ENCODE measurements at regions of chrX and their contacts with region 1.

Region 1: GRCh38 chrX:101348452-101349192 is at the start of gene TIMM8A:
- DNase-seq: peak; percentile 60
- ATAC-seq: peak; percentile 96
- H3K4me3 ChIP-seq: peak within 1 kb of the TSS; percentile 100
- H3K27ac ChIP-seq: peak within 1 kb of the TSS; percentile 100
- H3K4me1 ChIP-seq: no peaks in the 10 kb centered on the region
- H3K27me3 ChIP-seq: no peaks in the 10 kb centered on the region; the same call in 1 of the 2 replicates
- CTCF ChIP-seq: no peak
- POLR2A ChIP-seq: peak; percentile 7; the same call in 1 of the 2 replicates
- RAD21 ChIP-seq: no peak
- total RNA-seq, gene TIMM8A: 2.2 and 3.1 TPM in 2 replicates

Region 2: DNA sequence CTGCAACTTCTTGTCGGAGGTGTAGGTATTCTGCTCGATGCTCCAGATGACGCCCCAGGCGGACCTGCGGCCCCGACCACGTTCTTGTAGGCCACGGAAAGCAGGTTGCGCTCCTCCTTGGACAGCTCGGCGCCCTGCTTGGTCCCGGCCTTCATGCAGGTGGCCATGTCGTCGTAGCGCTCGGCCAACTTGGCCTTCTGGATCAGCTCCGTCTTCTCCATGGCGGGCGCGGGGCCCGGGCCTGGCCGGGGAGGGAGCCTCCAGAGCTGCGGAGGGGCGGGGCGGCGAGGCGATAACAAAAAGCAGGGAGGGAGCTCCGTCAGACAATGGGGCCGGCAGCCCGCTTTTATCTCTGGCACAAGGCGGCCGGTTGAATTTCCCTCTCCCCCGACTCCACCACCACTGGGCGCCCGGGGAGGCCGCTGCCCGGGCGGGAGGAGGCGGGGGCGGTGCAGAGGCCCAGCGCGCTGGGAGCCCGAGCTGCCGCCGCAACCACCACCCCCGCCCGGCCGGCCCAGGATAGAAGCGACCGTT is 157.3 kb before region 1 on chrX:
- CTCF ChIA-PET with region 1: no interaction called
- POLR2A ChIA-PET with region 1: no interaction called
- dilution Hi-C with region 1: no loop called
- in situ Hi-C with region 1: no loop called
- intact Hi-C with region 1: no loop called
- DNase-seq: no peak
- ATAC-seq: peak; percentile 29; the same call in 1 of the 2 replicates
- H3K4me3 ChIP-seq: no peak overlapping the region
- H3K27ac ChIP-seq: no peak overlapping the region
- H3K4me1 ChIP-seq: peaks cover 3% of the 10 kb centered on the region
- H3K27me3 ChIP-seq: 0 out of 2 replicates have a peak, but pooled peaks cover 1% of the 10 kb centered on the region
- CTCF ChIP-seq: no peak
- POLR2A ChIP-seq: no peak
- RAD21 ChIP-seq: no peak

Region 3: DNA sequence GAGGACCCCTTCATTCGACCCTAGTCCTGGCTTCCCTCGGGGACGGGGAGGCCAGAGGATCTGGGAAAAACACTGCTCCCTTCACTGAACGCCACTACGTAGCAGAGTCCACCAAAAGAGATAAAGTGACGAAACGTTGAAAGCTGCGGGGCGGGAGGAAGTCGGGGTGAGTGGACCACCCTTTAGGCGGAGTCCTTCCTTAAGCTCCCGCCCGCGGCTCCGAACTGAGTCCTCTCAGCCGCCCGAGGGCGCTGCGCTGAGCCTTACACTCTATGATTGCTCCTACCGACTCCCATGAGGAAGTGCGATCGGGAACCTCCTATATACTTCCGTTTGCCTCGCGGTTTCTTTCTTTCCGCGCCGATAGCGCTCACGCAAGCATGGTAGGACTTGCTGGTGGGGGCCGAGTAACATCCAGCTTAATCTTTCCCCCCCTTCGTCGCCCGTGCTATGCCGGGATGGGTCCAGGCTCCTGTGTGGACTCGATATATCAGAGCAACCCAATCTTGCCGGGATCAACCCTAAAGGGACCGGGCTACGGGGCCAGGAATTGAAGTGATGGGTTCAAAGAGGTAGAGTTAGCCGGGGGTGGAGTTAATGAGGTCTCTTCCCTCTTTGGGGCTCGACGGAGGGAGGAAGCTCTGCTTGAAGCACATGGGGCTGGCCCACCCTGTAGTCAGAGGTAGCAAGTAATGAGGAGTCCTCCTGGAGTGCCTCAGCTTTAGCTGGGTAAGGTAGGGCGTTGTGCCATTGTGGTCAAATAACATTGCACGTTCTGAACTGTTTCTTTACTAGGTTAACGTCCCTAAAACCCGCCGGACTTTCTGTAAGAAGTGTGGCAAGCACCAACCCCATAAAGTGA is 42.3 kb after region 1 on chrX and contains the start of gene RPL36A:
- CTCF ChIA-PET with region 1: no interaction called
- POLR2A ChIA-PET with region 1: no interaction called
- dilution Hi-C with region 1: no loop called
- in situ Hi-C with region 1: no loop called
- intact Hi-C with region 1: loop called (anchors 1 kb)
- DNase-seq: peak; percentile 89
- ATAC-seq: peak; percentile 99
- H3K4me3 ChIP-seq: peak within 1 kb of the TSS; percentile 74
- H3K27ac ChIP-seq: peak within 1 kb of the TSS; percentile 61
- H3K4me1 ChIP-seq: no peaks in the 10 kb centered on the region
- H3K27me3 ChIP-seq: peaks cover 9% of the 10 kb centered on the region; the same call in 1 of the 2 replicates
- CTCF ChIP-seq: peak; percentile 74
- POLR2A ChIP-seq: peak; percentile 98
- RAD21 ChIP-seq: no peak; the same call in 1 of the 2 replicates
- total RNA-seq, gene RPL36A: 677 and 1,679 TPM in 2 replicates